Naive thymus-derived CD4-positive, alpha-beta T cell (primary cell): ENCODE measurements at regions of chr11 and their contacts with region 1.

Region 1: GRCh38 chr11:9137293-9138132 is 46.1 kb upstream of the SCUBE2 start:
- DNase-seq: peak; percentile 20 to 72 (median 52)
- ATAC-seq: peak; percentile 94
- H3K4me3 ChIP-seq: no peak overlapping the region
- H3K4me3 Mint-ChIP-seq: peak overlapping the region in 6 of 10 donors; percentile 1 to 54 (median 11)
- H3K27ac ChIP-seq: no peak overlapping the region
- H3K27ac Mint-ChIP-seq: peak overlapping the region; percentile 3 to 84 (median 60)
- H3K4me1 ChIP-seq: peaks cover 0 to 3% of the 10 kb centered on the region in 2 donors
- H3K4me1 Mint-ChIP-seq: peaks cover 7 to 35% (median 15%) of the 10 kb centered on the region in 7 donors
- H3K27me3 ChIP-seq: no peaks in the 10 kb centered on the region
- H3K27me3 Mint-ChIP-seq: no peaks in the 10 kb centered on the region

Region 2: GRCh38 chr11:7703740-7704139 is 1433.8 kb before region 1 on chr11:
- CTCF ChIA-PET with region 1: no interaction called
- POLR2A ChIA-PET with region 1: no interaction called
- intact Hi-C with region 1: no loop called
- DNase-seq: no peak
- ATAC-seq: no peak
- H3K4me3 ChIP-seq: no peak overlapping the region
- H3K4me3 Mint-ChIP-seq: no peak overlapping the region
- H3K27ac ChIP-seq: no peak overlapping the region
- H3K27ac Mint-ChIP-seq: no peak overlapping the region
- H3K4me1 ChIP-seq: no peaks in the 10 kb centered on the region
- H3K4me1 Mint-ChIP-seq: no peaks in the 10 kb centered on the region
- H3K27me3 ChIP-seq: no peaks in the 10 kb centered on the region
- H3K27me3 Mint-ChIP-seq: peaks cover 17 to 32% (median 25%) of the 10 kb centered on the region in 5 donors

Region 3: DNA sequence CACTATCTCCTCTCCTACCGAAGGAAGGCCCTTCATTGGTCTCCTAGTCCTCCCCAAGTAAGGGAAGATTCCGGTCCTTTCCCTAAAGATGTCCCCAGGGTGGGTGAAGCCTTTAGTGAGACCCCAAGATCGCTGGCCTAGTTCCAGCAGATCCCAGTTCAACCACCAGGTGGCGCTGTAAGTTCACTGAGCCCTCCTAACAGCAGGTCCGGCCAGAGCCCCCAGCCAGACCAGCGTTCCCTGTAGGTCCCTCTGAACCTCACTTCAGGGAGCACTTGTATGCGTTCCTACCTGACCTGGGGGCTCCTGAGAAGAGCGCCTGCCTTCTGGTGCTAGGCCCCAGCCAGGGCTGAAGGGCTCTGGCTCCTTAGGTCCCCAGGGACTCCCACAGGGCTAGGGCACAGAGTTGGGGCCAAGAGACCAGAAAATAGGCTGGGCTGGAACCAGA is 911.9 kb before region 1 on chr11:
- CTCF ChIA-PET with region 1: no interaction called
- POLR2A ChIA-PET with region 1: no interaction called
- intact Hi-C with region 1: loop called in 1 of 2 experiments (anchors 10 kb)
- DNase-seq: peak; percentile 11 to 66 (median 48)
- ATAC-seq: peak; percentile 65
- H3K4me3 ChIP-seq: no peak overlapping the region
- H3K4me3 Mint-ChIP-seq: no peak overlapping the region
- H3K27ac ChIP-seq: no peak overlapping the region
- H3K27ac Mint-ChIP-seq: no peak overlapping the region
- H3K4me1 ChIP-seq: no peaks in the 10 kb centered on the region
- H3K4me1 Mint-ChIP-seq: peaks cover 0 to 4% (median 0%) of the 10 kb centered on the region in 7 donors
- H3K27me3 ChIP-seq: no peaks in the 10 kb centered on the region
- H3K27me3 Mint-ChIP-seq: peaks cover 0 to 6% (median 0%) of the 10 kb centered on the region in 5 donors

Region 4: GRCh38 chr11:8688414-8689362 is 448.8 kb before region 1 on chr11:
- CTCF ChIA-PET with region 1: no interaction called
- POLR2A ChIA-PET with region 1: no interaction called
- intact Hi-C with region 1: loop called in 1 of 2 experiments (anchors 10 kb)
- DNase-seq: peak; percentile 50 to 86 (median 61)
- ATAC-seq: peak; percentile 92
- H3K4me3 ChIP-seq: peak overlapping the region; percentile 80
- H3K4me3 Mint-ChIP-seq: peak overlapping the region; percentile 89 to 99 (median 96)
- H3K27ac ChIP-seq: peak overlapping the region; percentile 85
- H3K27ac Mint-ChIP-seq: peak overlapping the region; percentile 90 to 99 (median 96)
- H3K4me1 ChIP-seq: peaks cover 15 to 17% of the 10 kb centered on the region in 2 donors
- H3K4me1 Mint-ChIP-seq: peaks cover 20 to 63% (median 45%) of the 10 kb centered on the region in 7 donors
- H3K27me3 ChIP-seq: no peaks in the 10 kb centered on the region
- H3K27me3 Mint-ChIP-seq: no peaks in the 10 kb centered on the region

Region 5: GRCh38 chr11:9015677-9016076 is 121.8 kb before region 1 on chr11:
- CTCF ChIA-PET with region 1: interaction called, 16 read pairs
- POLR2A ChIA-PET with region 1: no interaction called
- intact Hi-C with region 1: loop called (anchors 1 kb)
- DNase-seq: peak; percentile 20 to 59 (median 45)
- ATAC-seq: peak; percentile 82
- H3K4me3 ChIP-seq: no peak overlapping the region
- H3K4me3 Mint-ChIP-seq: no peak overlapping the region
- H3K27ac ChIP-seq: no peak overlapping the region
- H3K27ac Mint-ChIP-seq: no peak overlapping the region
- H3K4me1 ChIP-seq: peaks cover 0 to 9% of the 10 kb centered on the region in 2 donors
- H3K4me1 Mint-ChIP-seq: peaks cover 0 to 28% (median 18%) of the 10 kb centered on the region in 7 donors
- H3K27me3 ChIP-seq: no peaks in the 10 kb centered on the region
- H3K27me3 Mint-ChIP-seq: peaks cover 0 to 20% (median 7%) of the 10 kb centered on the region in 5 donors

Region 6: DNA sequence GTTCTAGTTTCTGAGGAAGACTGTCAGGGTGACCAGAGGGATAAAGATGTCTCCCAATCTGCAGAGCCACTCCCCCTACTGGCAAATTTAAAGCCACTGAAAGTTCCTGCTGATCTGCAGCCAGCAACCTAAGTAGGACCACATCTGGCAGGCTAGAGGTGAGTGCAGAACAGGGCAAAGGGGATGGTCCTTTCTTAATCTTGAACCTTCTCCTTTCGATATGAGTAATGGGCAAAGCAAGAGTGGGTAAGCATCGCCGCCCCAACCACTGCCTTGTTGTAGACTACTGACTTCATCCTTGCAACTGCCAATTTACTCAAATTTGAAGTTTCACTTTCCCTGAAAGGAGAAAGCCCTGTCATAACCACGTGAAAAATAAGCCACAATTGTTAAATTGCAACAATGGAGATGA is 76.8 kb before region 1 on chr11:
- CTCF ChIA-PET with region 1: no interaction called
- POLR2A ChIA-PET with region 1: no interaction called
- intact Hi-C with region 1: loop called in 1 of 2 experiments (anchors 5 kb)
- DNase-seq: peak in 1 of 9 donors; percentile 53
- ATAC-seq: peak; percentile 66
- H3K4me3 ChIP-seq: no peak overlapping the region
- H3K4me3 Mint-ChIP-seq: peak overlapping the region in 1 of 10 donors; percentile 40
- H3K27ac ChIP-seq: no peak overlapping the region
- H3K27ac Mint-ChIP-seq: peak overlapping the region in 1 of 9 donors; percentile 45
- H3K4me1 ChIP-seq: no peaks in the 10 kb centered on the region
- H3K4me1 Mint-ChIP-seq: peaks cover 0 to 14% (median 0%) of the 10 kb centered on the region in 7 donors
- H3K27me3 ChIP-seq: no peaks in the 10 kb centered on the region
- H3K27me3 Mint-ChIP-seq: peaks cover 0 to 30% (median 0%) of the 10 kb centered on the region in 5 donors

Region 7: DNA sequence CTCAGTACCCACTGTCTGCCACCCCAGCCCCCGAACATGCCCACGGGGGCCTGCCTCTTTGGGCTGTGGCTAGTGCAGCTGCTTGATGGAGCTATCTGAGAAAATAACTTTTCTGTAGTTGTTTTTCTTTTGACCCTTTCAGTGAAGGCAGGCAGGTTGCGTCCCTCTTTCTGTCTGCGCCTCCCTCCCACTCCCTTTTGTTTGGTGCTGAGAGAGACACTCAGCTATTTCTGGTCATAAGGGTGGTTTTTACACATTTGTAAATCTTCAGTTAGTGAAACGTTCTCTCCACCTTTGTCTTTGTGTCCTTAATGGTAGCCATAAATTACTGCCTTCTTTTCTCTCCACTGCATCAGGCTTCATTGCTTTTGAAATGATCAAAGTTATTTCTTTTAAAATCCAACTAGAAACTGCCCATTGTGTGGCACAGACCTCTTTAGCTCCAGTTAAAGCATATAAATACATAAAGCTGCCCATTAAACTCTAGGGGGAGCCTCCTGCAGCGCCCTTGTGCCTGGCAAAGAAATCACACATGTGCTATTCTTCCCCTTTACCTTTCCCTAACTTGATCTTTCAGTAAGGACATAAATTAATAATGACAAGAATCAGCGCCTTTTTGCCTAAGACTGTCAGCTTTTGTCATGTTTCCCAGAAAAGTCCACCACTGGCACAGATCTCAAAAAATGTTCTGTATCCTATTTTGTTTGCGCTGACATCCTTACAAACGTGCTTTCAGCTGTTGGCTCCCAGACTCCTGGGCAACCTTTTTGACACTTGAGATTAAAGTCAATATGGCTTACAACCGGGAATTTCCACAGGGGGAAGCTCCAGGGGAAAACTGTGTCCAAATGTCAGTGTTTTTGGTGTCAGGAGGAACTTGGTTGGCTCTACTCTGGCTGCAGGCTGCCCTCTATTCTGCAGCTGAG is 44.4 kb before region 1 on chr11:
- CTCF ChIA-PET with region 1: no interaction called
- POLR2A ChIA-PET with region 1: no interaction called
- intact Hi-C with region 1: loop called in 1 of 2 experiments (anchors 5 kb)
- DNase-seq: no peak
- ATAC-seq: no peak
- H3K4me3 ChIP-seq: no peak overlapping the region
- H3K4me3 Mint-ChIP-seq: peak overlapping the region in 9 of 10 donors; percentile 3 to 74 (median 38)
- H3K27ac ChIP-seq: no peak overlapping the region
- H3K27ac Mint-ChIP-seq: no peak overlapping the region
- H3K4me1 ChIP-seq: no peaks in the 10 kb centered on the region
- H3K4me1 Mint-ChIP-seq: peaks cover 0 to 16% (median 9%) of the 10 kb centered on the region in 7 donors
- H3K27me3 ChIP-seq: peaks cover 0 to 9% of the 10 kb centered on the region in 2 donors
- H3K27me3 Mint-ChIP-seq: peaks cover 56 to 68% (median 61%) of the 10 kb centered on the region in 5 donors

Region 8: GRCh38 chr11:9851366-9851765 is 713.9 kb after region 1 on chr11:
- CTCF ChIA-PET with region 1: no interaction called
- POLR2A ChIA-PET with region 1: no interaction called
- intact Hi-C with region 1: no loop called
- DNase-seq: no peak
- ATAC-seq: no peak
- H3K4me3 ChIP-seq: no peak overlapping the region
- H3K4me3 Mint-ChIP-seq: no peak overlapping the region
- H3K27ac ChIP-seq: no peak overlapping the region
- H3K27ac Mint-ChIP-seq: no peak overlapping the region
- H3K4me1 ChIP-seq: no peaks in the 10 kb centered on the region
- H3K4me1 Mint-ChIP-seq: peaks cover 0 to 9% (median 5%) of the 10 kb centered on the region in 7 donors
- H3K27me3 ChIP-seq: no peaks in the 10 kb centered on the region
- H3K27me3 Mint-ChIP-seq: no peaks in the 10 kb centered on the region